GM12878 (cell line): ENCODE measurements at regions of chr11 and their contacts with region 1.

Region 1: DNA sequence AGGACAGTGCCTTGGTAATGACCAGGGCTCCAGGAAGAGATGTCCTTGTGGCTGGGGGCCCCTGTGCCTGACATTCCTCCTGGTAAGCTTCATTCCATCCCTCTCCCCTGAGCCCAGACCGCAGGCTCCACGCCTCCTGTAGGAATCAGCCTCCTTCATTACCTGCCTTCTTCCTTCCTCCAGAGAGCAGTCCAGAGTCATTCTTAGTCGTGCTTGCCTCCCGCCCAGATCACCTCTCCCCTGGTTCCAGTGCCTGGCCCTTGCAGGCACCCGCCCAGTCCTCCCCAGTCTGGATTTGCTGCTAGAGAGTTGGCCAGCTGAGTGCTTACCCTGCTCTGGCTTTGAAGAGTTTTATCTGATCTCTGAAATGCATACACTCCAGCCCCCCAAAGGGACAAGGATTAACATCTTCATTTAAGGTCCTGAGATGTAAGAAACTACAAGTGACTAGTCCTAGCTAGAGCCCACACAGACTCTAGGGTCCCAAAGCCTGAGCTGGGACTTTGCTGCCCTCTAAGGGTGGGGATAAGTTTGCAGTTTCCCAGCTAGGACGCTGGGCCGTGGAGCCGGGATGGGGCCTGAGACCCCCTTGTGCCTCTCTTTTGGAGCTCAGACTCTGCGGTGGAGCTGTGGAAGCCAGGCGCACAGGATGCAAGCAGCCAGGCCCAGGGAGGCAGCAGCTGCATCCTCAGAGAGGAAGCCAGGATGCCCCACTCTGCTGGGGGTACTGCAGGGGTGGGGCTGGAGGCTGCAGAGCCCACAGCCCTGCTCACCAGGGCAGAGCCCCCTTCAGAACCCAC is 1.6 kb downstream of the NR1H3 start:
- DNase-seq: no peak
- ATAC-seq: peak; percentile 94
- H3K4me3 ChIP-seq: no peak overlapping the region
- H3K27ac ChIP-seq: no peak overlapping the region
- H3K4me1 ChIP-seq: no peaks in the 10 kb centered on the region
- H3K27me3 ChIP-seq: no peaks in the 10 kb centered on the region
- CTCF ChIP-seq: peak; percentile 68 to 81 (median 76)
- EP300 ChIP-seq: no peak
- POLR2A ChIP-seq: no peak
- RAD21 ChIP-seq: peak; percentile 75

Region 2: DNA sequence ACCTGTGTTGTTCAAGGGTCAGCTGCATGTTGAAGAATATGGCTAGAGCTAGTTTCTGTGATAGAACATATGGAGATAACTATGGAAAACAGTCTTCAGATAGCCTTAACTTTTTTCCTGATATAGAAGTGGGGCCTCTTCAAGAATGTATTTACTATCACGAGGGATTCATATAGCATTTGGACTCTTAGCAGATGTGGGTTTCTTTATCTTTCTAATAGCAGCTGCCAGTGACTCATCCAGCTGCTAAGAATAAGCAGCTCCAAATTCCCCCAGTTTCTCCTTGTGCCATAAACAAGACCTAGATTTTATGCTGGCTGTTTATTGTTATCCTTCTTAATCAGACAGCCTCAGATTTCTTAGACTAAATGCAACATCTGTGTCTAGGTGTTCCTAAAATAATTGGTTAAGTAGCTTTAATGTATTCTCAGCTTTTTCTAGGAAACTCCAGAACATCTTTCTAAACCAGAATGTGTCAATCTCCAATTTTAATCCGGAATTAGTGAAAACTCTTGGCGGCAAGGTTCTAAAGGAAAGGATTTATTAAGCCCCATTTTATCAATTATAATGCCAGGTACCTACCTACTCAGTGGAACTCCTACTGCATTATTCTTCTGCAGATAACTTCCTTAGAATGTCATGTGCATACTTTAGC is 203.0 kb before region 1 on chr11:
- CTCF ChIA-PET with region 1: no interaction called
- POLR2A ChIA-PET with region 1: interaction called, 15 read pairs
- RAD21 ChIA-PET with region 1: no interaction called
- SMC1A ChIA-PET with region 1: no interaction called
- in situ Hi-C with region 1: no loop called
- intact Hi-C with region 1: no loop called
- DNase-seq: no peak
- ATAC-seq: peak; percentile 42; the same call in 2 of the 3 replicates
- H3K4me3 ChIP-seq: no peak overlapping the region
- H3K27ac ChIP-seq: no peak overlapping the region
- H3K4me1 ChIP-seq: 0 out of 2 replicates have a peak, but pooled peaks cover 3% of the 10 kb centered on the region
- H3K27me3 ChIP-seq: no peaks in the 10 kb centered on the region
- CTCF ChIP-seq: no peak
- EP300 ChIP-seq: no peak
- POLR2A ChIP-seq: no peak
- RAD21 ChIP-seq: no peak

Region 3: GRCh38 chr11:47186076-47186936 is 73.1 kb before region 1 on chr11 and contains the start of gene PACSIN3:
- CTCF ChIA-PET with region 1: interaction called, 88 read pairs
- POLR2A ChIA-PET with region 1: interaction called, 3 read pairs
- RAD21 ChIA-PET with region 1: interaction called, 5 read pairs
- SMC1A ChIA-PET with region 1: interaction called, 35 read pairs
- in situ Hi-C with region 1: no loop called
- intact Hi-C with region 1: no loop called
- DNase-seq: no peak
- ATAC-seq: peak; percentile 77
- H3K4me3 ChIP-seq: peak within 1 kb of the TSS; percentile 61
- H3K27ac ChIP-seq: no peak within 1 kb of the TSS
- H3K4me1 ChIP-seq: peaks cover 11% of the 10 kb centered on the region
- H3K27me3 ChIP-seq: peaks cover 0 to 13% of the 10 kb centered on the region in 2 experiments; a peak in 3 of 4 replicates
- CTCF ChIP-seq: no peak
- EP300 ChIP-seq: no peak
- POLR2A ChIP-seq: no peak
- RAD21 ChIP-seq: no peak
- polyA plus RNA-seq, gene PACSIN3: 0.05 TPM in 1 of 2 experiments, not detected in the other

Region 4: GRCh38 chr11:47248664-47249377 is 10.6 kb before region 1 on chr11 and contains the start of gene ACP2:
- CTCF ChIA-PET with region 1: interaction called, 25 read pairs
- POLR2A ChIA-PET with region 1: interaction called, 7 read pairs
- RAD21 ChIA-PET with region 1: interaction called, 8 read pairs
- SMC1A ChIA-PET with region 1: interaction called, 17 read pairs
- in situ Hi-C with region 1: no loop called
- intact Hi-C with region 1: no loop called
- DNase-seq: peak; percentile 64
- ATAC-seq: peak; percentile 95
- H3K4me3 ChIP-seq: peak within 1 kb of the TSS; percentile 91
- H3K27ac ChIP-seq: peak within 1 kb of the TSS; percentile 90
- H3K4me1 ChIP-seq: peaks cover 8% of the 10 kb centered on the region
- H3K27me3 ChIP-seq: no peaks in the 10 kb centered on the region
- CTCF ChIP-seq: peak; percentile 33 to 51 (median 43); a peak in 5 of 6 replicates
- EP300 ChIP-seq: no peak
- POLR2A ChIP-seq: peak; percentile 94
- RAD21 ChIP-seq: peak; percentile 45
- polyA plus RNA-seq, gene ACP2: 0.98 to 1.1 TPM

Region 5: GRCh38 chr11:47285969-47286770 is 26.8 kb after region 1 on chr11:
- CTCF ChIA-PET with region 1: no interaction called
- POLR2A ChIA-PET with region 1: no interaction called
- RAD21 ChIA-PET with region 1: no interaction called
- SMC1A ChIA-PET with region 1: no interaction called
- in situ Hi-C with region 1: no loop called
- intact Hi-C with region 1: no loop called
- DNase-seq: no peak
- ATAC-seq: no peak
- H3K4me3 ChIP-seq: no peak overlapping the region
- H3K27ac ChIP-seq: no peak overlapping the region
- H3K4me1 ChIP-seq: no peaks in the 10 kb centered on the region
- H3K27me3 ChIP-seq: no peaks in the 10 kb centered on the region
- CTCF ChIP-seq: no peak
- EP300 ChIP-seq: no peak
- POLR2A ChIP-seq: no peak
- RAD21 ChIP-seq: no peak

Region 6: DNA sequence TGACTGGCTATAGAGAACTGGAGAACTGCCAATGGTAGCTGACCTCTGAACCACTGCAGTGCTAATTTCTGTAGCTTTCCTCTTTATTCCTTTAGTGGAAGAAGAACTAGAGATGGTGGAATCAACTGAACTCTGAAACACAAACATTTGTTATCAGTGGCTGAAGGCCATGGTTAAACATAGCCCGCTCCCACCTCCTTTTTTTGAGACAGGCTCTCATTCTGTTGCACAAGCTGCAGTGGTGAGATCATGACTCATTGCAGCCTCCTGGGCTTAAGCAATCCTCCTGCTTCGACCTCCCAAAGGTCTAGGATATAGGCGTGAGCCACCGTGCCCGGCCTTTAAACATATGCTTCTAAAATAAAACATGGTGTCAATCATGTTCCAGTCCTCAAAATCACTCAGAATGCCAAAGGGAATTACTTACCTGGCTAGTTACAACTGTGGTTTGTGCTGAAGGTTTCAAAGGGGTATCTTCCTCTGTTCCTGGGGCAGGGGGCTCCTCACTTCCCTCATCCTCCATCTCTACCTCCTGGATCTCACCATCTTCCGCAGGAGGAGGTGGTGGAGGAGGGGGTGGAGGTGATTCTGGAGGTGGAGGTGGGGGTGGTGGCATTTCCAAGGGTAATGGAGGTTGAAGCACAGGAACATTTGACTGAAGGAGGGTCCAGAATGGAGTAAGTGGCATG is 464.8 kb after region 1 on chr11:
- CTCF ChIA-PET with region 1: no interaction called
- POLR2A ChIA-PET with region 1: no interaction called
- RAD21 ChIA-PET with region 1: no interaction called
- SMC1A ChIA-PET with region 1: no interaction called
- in situ Hi-C with region 1: no loop called
- intact Hi-C with region 1: no loop called
- DNase-seq: no peak
- ATAC-seq: no peak
- H3K4me3 ChIP-seq: no peak overlapping the region
- H3K27ac ChIP-seq: no peak overlapping the region
- H3K4me1 ChIP-seq: no peaks in the 10 kb centered on the region
- H3K27me3 ChIP-seq: no peaks in the 10 kb centered on the region
- CTCF ChIP-seq: no peak
- EP300 ChIP-seq: no peak
- POLR2A ChIP-seq: 0 out of 2 replicates have a peak, but pooled peaks have one; percentile 29
- RAD21 ChIP-seq: no peak